ENCODE measurements at regions of chr11 and their contacts with region 1.

Region 1: DNA sequence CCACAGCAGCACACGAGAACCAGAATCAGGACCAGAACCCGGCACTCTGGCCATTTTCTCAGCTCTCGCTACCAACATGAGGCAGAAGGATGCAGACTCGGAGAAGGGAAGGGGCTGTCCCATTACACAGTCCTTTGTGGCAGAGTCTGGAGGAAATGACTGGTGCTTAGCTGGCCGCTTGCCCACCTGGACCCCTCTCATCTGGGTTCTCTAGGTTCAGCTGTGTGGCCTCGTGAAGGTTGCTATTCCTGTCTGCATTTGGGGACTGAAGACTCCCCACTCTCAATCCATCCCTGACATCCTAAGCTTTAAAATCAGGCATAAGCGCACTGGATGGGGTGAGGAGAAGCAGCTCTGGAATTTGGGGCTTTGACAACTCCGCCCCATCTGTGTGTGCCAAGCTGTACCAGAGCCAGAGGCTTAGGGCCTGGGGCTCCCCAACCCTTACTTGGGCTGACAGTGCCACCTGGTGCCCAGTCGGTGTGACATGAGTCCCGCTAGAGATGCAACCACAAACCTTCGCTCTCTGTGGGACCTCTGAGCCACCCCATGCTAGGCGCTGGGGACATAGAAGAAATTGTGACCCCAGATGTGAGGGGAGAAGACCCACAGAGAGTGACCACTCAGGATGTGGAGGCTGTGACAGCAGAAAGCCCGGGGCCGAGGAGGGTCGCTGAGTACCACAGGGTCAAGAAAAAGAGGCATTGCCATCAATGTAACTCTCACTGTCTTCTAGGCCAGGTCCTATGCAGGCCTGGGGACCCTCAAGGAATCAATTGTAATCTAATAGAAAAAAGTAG is 35.9 kb upstream of the FCHSD2 start:
- DNase-seq: peak; percentile 51 to 97 (median 83)

Region 2: DNA sequence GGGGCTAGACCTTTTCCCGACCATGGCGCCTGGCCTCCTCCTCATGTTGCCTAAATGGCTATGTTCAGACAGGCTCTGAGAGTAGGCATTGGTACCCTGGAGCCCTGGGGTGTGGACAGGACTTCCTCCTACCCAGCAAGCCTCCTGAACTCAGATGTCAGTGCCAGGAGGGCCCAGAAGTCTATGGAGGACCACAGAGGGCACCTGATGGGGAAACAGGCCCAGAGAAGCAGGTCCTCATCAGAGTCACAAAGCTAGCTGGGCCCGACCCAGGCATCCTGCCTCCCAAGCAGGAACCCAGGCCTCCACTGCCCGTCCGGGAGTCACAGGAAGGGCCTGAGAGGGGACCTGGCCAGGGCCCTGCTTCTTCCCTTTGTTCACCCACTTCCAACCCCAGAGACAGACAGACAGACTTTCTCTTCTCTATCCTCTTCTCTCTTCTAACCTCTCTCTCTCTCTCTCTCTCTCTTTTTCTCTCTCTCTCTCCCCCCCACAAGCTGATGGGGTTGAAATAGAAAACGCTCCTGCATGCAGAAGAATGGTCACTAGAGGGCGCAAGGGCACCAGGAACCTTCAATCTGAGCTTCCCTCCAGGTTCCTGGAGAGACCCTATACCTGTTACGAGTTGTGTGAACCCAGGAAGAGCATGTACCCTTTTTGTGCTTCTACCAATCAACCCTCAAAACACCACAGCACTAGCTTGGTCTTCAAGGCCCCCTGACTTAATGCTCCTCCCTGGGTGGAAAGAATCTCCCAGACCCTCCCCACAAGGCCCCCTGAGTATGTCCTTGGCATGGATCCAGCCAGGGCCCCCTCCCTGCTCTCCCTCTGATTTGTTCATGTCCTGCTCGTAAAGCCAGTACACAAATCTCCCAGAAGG is 452.9 kb before region 1 on chr11:
- intact Hi-C with region 1: loop called (anchors 1 kb)
- DNase-seq: peak in 8 of 10 donors; percentile 42 to 96 (median 78)

Region 3: GRCh38 chr11:72831513-72832300 is 346.3 kb before region 1 on chr11:
- intact Hi-C with region 1: loop called (anchors 1 kb)
- DNase-seq: peak; percentile 76 to 98 (median 90)